AG04450 (cell line): ENCODE measurements at regions of chr20 and their contacts with region 1.

Region 1: DNA sequence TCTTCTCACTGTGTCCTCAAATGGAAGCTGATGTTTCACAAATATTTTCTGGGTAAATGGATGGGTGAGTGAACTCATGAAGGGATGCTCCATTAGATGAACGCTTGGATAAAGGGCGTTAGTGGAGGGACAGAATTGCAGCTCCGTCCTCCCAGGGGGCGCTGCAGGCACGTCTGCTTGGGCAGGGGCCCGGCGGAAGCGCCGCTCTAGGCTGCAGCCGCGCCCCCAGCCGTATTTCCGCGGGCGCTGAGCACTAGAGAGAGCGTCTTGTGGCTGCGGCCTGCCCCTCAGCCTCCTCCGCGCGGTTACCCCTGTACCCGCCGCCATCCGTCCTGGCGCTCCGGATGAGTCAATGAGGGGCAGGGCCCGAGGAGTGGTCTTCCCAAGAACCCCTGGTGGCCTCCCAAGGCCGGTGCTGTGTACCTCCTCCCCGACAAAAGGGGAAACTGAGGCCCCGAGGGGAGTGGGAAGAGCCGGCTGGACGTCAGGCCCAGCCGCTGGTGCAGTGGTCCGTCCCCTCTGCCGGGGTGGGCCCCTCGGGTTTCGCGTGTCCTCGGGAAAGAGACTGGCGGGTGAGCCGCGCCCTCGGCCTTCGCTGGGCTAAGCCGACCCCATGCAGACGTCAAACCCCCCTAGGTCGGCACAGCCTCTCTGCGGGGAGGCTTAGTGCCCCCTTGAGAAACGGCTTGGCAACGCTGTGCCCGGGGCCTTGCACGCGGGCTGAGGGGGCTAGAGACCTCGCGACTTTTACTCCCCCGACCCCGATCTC is 11.5 kb upstream of the SNHG17 start:
- DNase-seq: peak; percentile 90
- H3K4me3 ChIP-seq: peak overlapping the region; percentile 91
- H3K27ac ChIP-seq: peak overlapping the region; percentile 57
- H3K27me3 ChIP-seq: no peaks in the 10 kb centered on the region
- CTCF ChIP-seq: peak; percentile 94

Region 2: DNA sequence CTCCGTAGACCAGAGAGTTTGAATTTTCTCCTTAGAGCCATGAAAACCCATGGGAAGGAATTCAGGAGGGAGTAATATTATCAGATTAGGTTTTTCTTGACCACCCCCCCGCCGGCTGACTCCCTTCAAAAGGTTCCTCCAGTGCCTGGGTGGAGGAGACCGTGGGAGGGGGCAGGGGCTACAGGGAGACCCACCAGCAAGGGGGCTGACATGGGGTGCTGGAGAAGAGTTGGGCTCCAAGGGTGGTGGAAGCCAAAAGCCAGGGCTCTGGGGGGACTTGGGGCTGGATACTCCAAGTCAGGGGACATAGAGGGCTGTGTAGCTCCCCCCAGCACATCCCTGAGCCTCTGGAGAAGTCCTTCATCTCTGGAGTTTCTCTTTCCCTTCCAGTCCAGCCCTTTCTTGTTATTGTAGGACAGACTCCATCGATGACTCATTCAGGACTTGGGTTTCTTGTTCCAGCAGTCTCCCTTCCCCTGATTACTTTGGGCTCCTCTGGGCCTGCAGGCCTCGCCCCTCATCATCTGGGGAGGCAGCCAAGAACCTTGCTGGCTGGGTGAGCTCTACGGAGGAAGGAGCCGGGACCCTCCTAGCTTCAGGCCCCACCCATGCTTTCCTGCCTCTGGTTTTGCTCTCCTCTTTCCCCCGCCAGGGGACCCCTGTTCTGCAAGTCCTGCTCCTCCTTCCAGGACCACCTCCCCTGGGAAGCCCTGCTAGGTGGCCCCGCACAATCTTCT is 175.6 kb before region 1 on chr20:
- CTCF ChIA-PET with region 1: no interaction called
- POLR2A ChIA-PET with region 1: no interaction called
- DNase-seq: peak; percentile 92
- H3K4me3 ChIP-seq: no peak overlapping the region
- H3K27ac ChIP-seq: peak overlapping the region; percentile 77
- H3K27me3 ChIP-seq: no peaks in the 10 kb centered on the region
- CTCF ChIP-seq: no peak

Region 3: DNA sequence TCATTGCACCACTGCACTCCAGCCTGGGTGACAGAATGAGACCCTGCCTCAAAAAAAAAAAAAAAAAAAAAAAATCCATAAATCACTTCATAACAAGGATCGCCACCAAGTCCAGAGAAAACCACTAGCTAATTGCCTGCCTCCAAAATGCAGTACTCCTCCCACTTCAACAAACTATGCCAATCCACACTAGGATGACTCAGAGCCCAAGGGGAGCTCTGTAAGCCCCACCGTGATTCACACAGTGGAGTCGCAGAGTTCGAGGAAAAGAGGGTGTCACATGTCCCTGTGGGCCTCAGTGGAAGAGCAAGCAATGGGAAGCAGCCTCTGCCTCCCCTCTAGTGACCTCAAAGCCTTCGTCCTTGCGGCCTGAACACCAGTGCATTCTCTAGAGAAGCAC is 20.6 kb before region 1 on chr20:
- CTCF ChIA-PET with region 1: interaction called, 6 read pairs
- POLR2A ChIA-PET with region 1: interaction called, 10 read pairs
- DNase-seq: peak; percentile 69
- H3K4me3 ChIP-seq: no peak overlapping the region
- H3K27ac ChIP-seq: peak overlapping the region; percentile 70
- H3K27me3 ChIP-seq: no peaks in the 10 kb centered on the region
- CTCF ChIP-seq: no peak

Region 4: GRCh38 chr20:38472513-38473372 is 26.1 kb after region 1 on chr20 and contains the start of gene RALGAPB:
- CTCF ChIA-PET with region 1: interaction called, 16 read pairs
- POLR2A ChIA-PET with region 1: interaction called, 11 read pairs
- DNase-seq: peak; percentile 94
- H3K4me3 ChIP-seq: peak within 1 kb of the TSS; percentile 80
- H3K27ac ChIP-seq: peak within 1 kb of the TSS; percentile 61
- H3K27me3 ChIP-seq: no peaks in the 10 kb centered on the region
- CTCF ChIP-seq: peak; percentile 52
- polyA plus RNA-seq, gene RALGAPB: 24.1 and 30.1 TPM in 2 replicates

Region 5: DNA sequence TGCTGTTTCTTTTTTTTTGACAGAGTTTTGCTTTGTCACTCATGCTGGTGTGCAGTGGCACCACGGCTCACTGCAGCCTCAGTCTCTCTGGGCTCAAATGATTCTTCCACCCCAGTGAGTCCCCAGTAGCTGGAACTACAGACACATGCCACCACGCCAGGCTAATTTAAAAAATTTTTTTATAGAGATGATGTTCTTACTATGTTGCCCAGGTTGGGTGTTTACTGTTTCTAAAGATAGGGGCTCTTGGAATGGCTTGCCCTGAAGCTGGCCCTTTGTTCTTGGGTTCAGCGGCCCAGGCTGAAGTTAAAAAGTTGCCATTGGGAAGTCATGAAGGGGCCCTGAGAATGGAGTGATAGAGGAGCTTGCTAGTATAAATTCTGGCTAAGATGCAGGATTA is 42.6 kb after region 1 on chr20:
- CTCF ChIA-PET with region 1: no interaction called
- POLR2A ChIA-PET with region 1: no interaction called
- DNase-seq: no peak
- H3K4me3 ChIP-seq: no peak overlapping the region
- H3K27ac ChIP-seq: no peak overlapping the region
- H3K27me3 ChIP-seq: no peaks in the 10 kb centered on the region
- CTCF ChIP-seq: no peak